SK-N-SH (cell line): ENCODE measurements at regions of chr3 and their contacts with region 1.

Region 1: DNA sequence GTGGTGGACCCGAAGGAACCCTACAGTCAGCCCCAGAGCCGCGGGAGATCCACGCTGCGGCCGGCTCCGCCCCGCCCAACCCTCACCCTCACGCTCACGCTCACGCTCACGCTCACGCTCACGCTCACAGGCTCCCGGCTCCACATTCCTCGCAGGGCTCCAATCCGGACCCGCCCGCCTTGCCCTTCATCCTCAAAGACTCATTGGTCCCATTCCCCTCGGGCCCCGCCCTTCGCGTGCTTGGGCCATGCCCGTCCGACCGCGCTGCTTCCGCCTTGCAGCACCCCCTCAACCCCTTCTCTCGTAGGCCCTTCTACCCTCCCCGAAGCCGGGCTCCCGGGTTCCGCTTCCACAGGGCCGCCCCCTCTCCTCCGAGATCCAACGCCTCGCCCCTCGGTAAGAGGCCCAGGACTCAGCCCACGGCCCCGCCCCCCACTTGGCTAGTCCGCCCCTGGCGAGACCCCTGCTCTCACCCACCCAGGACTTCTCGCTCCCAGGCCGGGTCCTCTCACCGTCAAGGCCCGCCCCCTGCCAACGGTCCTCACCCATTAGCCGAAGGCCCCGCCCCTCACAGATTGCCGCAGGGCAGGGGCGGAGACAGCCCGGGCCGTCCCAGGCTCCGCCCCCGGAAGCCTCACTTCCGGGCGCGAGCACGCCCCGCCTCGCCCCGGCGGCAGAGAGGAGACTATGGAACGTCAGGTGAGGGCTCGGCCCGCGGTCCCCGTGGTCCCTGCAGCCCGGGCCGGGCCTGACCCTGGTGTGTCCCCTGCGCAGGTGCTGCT is at the start of gene APEH:
- DNase-seq: peak; percentile 99
- H3K4me3 ChIP-seq: peak within 1 kb of the TSS; percentile 83 to 90
- H3K27ac ChIP-seq: peak within 1 kb of the TSS; percentile 83 to 90
- H3K4me1 ChIP-seq: peaks cover 7 to 19% of the 10 kb centered on the region in 2 experiments; a peak in 1 of 4 replicates
- H3K27me3 ChIP-seq: no peaks in the 10 kb centered on the region
- CTCF ChIP-seq: no peak; the same call in 1 of the 2 replicates
- EP300 ChIP-seq: no peak
- RAD21 ChIP-seq: no peak
- polyA plus RNA-seq, gene APEH: 112 and 122 TPM in 2 replicates

Region 2: GRCh38 chr3:49553692-49554632 is 119.9 kb before region 1 on chr3 and contains the start of gene BSN:
- CTCF ChIA-PET with region 1: interaction called, 17 read pairs
- POLR2A ChIA-PET with region 1: interaction called, 5 read pairs
- DNase-seq: peak; percentile 100
- H3K4me3 ChIP-seq: peak within 1 kb of the TSS; percentile 81 to 85
- H3K27ac ChIP-seq: peak within 1 kb of the TSS in 1 of 2 experiments; percentile 84; a peak in 3 of 4 replicates
- H3K4me1 ChIP-seq: peaks cover 0 to 31% of the 10 kb centered on the region in 2 experiments; a peak in 2 of 4 replicates
- H3K27me3 ChIP-seq: no peaks in the 10 kb centered on the region
- CTCF ChIP-seq: no peak
- EP300 ChIP-seq: no peak; a peak in 1 of 4 replicates
- RAD21 ChIP-seq: no peak
- polyA plus RNA-seq, gene BSN: 0.07 and 0.08 TPM in 2 replicates

Region 3: DNA sequence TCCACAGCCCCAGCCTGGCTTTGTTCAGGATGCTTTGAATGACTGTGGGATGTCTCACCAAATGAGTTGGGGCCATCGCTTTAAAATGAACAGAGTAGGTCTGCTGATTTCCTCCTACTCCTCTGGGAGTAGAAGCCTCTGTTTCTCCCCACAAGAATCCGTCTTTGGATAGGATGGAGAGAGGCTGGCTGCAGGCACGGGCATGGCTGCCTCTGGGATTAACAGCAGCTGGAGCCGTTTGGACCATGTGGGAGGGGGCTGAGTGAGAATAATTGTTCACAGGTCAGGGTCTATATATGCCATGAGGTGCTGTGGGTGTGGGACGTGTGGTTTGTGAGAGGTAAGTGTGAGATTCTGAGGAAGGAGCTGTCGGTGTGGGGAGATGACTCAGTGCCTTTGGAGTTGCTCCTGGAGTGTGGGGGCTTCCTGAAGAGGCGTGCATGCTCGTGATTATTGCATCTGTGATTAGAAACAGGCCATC is 47.8 kb before region 1 on chr3:
- CTCF ChIA-PET with region 1: interaction called, 15 read pairs
- POLR2A ChIA-PET with region 1: no interaction called
- DNase-seq: no peak
- H3K4me3 ChIP-seq: no peak overlapping the region
- H3K27ac ChIP-seq: no peak overlapping the region
- H3K4me1 ChIP-seq: peaks cover 0 to 35% of the 10 kb centered on the region in 2 experiments; a peak in 1 of 4 replicates
- H3K27me3 ChIP-seq: peaks cover 21% of the 10 kb centered on the region; the same call in 1 of the 2 replicates
- CTCF ChIP-seq: no peak
- EP300 ChIP-seq: no peak
- RAD21 ChIP-seq: no peak

Region 4: GRCh38 chr3:49638445-49638844 is 35.5 kb before region 1 on chr3:
- CTCF ChIA-PET with region 1: interaction called, 13 read pairs
- POLR2A ChIA-PET with region 1: no interaction called
- DNase-seq: no peak
- H3K4me3 ChIP-seq: no peak overlapping the region
- H3K27ac ChIP-seq: no peak overlapping the region
- H3K4me1 ChIP-seq: no peaks in the 10 kb centered on the region
- H3K27me3 ChIP-seq: no peaks in the 10 kb centered on the region
- CTCF ChIP-seq: no peak
- EP300 ChIP-seq: no peak
- RAD21 ChIP-seq: no peak

Region 5: DNA sequence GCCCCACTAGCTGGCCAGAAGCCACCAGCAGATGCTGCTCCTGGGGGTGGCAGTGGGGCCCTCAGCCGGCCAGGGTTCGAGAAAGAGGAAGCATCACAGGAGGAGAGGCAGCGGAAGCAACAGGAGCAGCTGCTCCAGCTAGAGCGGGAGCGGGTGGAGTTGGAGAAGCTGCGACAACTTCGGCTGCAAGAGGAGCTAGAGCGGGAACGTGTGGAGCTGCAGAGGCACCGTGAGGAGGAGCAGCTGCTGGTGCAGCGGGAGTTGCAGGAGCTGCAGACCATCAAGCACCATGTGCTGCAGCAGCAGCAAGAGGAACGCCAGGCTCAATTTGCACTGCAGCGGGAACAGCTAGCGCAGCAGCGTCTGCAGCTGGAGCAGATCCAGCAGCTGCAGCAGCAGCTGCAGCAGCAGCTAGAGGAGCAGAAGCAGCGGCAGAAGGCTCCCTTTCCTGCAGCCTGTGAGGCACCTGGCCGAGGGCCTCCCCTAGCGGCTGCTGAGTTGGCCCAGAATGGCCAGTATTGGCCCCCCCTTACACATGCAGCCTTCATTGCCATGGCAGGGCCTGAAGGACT is 17.3 kb before region 1 on chr3:
- CTCF ChIA-PET with region 1: interaction called, 20 read pairs
- POLR2A ChIA-PET with region 1: interaction called, 4 read pairs
- DNase-seq: no peak
- H3K4me3 ChIP-seq: no peak overlapping the region
- H3K27ac ChIP-seq: no peak overlapping the region
- H3K4me1 ChIP-seq: no peaks in the 10 kb centered on the region
- H3K27me3 ChIP-seq: no peaks in the 10 kb centered on the region
- CTCF ChIP-seq: no peak
- EP300 ChIP-seq: no peak
- RAD21 ChIP-seq: no peak